ENCODE measurements at regions of chr1 and their contacts with region 1.

Region 1: DNA sequence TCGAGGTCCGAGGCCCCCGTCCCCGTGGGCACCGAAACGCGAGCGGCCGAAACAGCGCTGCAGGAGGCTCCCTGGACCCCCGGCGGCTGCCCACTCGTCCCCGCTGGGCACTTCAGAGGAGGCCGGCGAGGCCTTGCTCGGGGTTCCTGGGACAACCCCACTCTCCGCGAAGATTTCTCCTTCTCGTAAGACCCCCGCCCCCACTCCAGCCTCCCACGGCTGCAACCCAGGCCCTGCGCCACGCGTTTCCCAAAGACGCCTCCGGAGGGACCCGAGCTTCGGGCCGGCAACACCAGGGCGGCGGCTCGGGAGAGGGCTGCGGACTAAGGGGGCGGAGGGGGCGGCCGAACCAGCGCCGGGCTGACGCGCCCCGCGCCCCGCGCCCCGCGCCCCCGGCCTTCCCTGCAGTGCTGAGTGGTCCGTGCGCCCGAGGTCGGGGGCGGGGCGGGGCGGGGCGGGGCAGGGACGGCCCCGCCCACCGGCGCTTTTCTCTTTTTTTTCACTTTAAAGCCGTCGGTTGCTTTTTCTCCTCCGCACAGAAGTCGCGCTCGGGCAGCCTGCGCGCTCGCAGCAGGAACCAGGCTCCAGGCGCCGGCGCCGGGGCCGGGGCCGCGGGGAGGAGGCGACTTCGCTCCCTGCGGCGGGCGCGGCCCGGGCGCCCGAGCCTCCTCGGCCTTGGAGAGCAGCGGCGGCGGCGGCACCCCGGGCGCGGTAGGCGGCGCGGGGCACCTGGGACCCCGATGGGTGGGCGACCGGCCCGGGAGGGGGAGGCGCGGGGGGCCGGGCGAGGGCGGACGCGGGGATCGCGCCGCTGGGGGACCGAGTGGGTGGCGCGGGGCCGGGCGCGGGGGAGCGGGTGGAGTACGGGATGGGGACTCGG is at the start of gene SPSB1:
- DNase-seq: peak; percentile 62 to 67
- ATAC-seq: peak; percentile 46 to 48
- H3K4me3 ChIP-seq: peak within 1 kb of the TSS; percentile 67 to 98 (median 86)
- H3K27ac ChIP-seq: peak within 1 kb of the TSS; percentile 80 to 95 (median 90)
- H3K4me1 ChIP-seq: peaks cover 18 to 39% of the 10 kb centered on the region in 2 donors
- H3K27me3 ChIP-seq: no peaks in the 10 kb centered on the region
- CTCF ChIP-seq: no peak
- POLR2A ChIP-seq: peak; percentile 95 to 97
- total RNA-seq, gene SPSB1: 40.4 to 161 (median 56.6) TPM

Region 2: GRCh38 chr1:9362488-9362887 is 69.9 kb after region 1 on chr1:
- in situ Hi-C with region 1: no loop called
- intact Hi-C with region 1: loop called (anchors 5 kb)
- DNase-seq: no peak
- ATAC-seq: peak in 1 of 2 donors; percentile 17
- H3K4me3 ChIP-seq: no peak overlapping the region
- H3K27ac ChIP-seq: peak overlapping the region; percentile 27 to 82 (median 67)
- H3K4me1 ChIP-seq: peaks cover 14 to 26% of the 10 kb centered on the region in 2 donors
- H3K27me3 ChIP-seq: no peaks in the 10 kb centered on the region
- CTCF ChIP-seq: no peak
- POLR2A ChIP-seq: no peak

Region 3: GRCh38 chr1:9384751-9385245 is 92.2 kb after region 1 on chr1:
- in situ Hi-C with region 1: no loop called
- intact Hi-C with region 1: loop called (anchors 2 kb)
- DNase-seq: peak; percentile 88 to 94
- ATAC-seq: peak; percentile 87 to 90
- H3K4me3 ChIP-seq: peak overlapping the region in 2 of 4 donors; percentile 13 to 19
- H3K27ac ChIP-seq: peak overlapping the region; percentile 87 to 96 (median 90)
- H3K4me1 ChIP-seq: peaks cover 33 to 36% of the 10 kb centered on the region in 2 donors
- H3K27me3 ChIP-seq: no peaks in the 10 kb centered on the region
- CTCF ChIP-seq: peak in 1 of 5 experiments; percentile 42
- POLR2A ChIP-seq: peak; percentile 45 to 57

Region 4: DNA sequence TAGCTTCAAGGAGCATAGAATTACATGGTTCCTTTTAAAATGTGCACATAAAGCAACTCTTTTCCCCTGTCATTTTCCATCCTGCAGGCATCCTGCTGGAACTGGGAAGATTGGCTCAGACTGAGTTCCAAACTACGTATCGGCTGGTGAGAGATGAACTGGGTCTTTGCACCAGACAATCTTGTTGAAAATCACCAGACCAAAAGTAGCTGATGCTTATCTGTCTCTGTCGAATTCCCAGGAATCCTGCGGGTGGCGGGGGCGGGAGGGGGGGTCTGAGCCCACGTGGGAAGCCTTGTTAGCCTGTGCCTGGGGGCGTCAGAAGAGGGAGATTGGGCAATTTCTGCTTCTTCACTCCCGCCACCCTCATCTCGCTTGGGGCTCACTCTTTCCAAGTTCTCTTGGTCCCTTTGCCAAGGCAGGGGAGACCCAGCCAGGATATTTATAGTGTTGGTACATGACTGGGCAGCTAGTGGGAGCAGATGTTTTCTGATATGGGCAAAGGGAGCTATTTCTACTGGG is 156.6 kb after region 1 on chr1:
- in situ Hi-C with region 1: loop called in 3 of 4 experiments (anchors 5 to 10 kb)
- intact Hi-C with region 1: loop called (anchors 2 kb)
- DNase-seq: peak; percentile 79 to 90
- ATAC-seq: peak; percentile 77 to 84
- H3K4me3 ChIP-seq: peak overlapping the region; percentile 7 to 38 (median 32)
- H3K27ac ChIP-seq: peak overlapping the region; percentile 82 to 96 (median 88)
- H3K4me1 ChIP-seq: peaks cover 39 to 46% of the 10 kb centered on the region in 2 donors
- H3K27me3 ChIP-seq: no peaks in the 10 kb centered on the region
- CTCF ChIP-seq: no peak
- POLR2A ChIP-seq: no peak

Region 5: GRCh38 chr1:9455487-9456234 is 163.1 kb after region 1 on chr1:
- in situ Hi-C with region 1: loop called (anchors 5 to 10 kb)
- intact Hi-C with region 1: loop called (anchors 1 kb)
- DNase-seq: peak in 1 of 2 donors; percentile 63
- ATAC-seq: peak; percentile 50 to 67
- H3K4me3 ChIP-seq: peak overlapping the region in 1 of 4 donors; percentile 15
- H3K27ac ChIP-seq: peak overlapping the region in 3 of 4 donors; percentile 15 to 32 (median 27)
- H3K4me1 ChIP-seq: peaks cover 13 to 16% of the 10 kb centered on the region in 2 donors
- H3K27me3 ChIP-seq: no peaks in the 10 kb centered on the region
- CTCF ChIP-seq: peak; percentile 78 to 94 (median 89)
- POLR2A ChIP-seq: no peak

Measured in gastrocnemius medialis (tissue), 4 donors.